Caco-2 (cell line): ENCODE measurements at regions of chr1 and their contacts with region 1.

Region 1: DNA sequence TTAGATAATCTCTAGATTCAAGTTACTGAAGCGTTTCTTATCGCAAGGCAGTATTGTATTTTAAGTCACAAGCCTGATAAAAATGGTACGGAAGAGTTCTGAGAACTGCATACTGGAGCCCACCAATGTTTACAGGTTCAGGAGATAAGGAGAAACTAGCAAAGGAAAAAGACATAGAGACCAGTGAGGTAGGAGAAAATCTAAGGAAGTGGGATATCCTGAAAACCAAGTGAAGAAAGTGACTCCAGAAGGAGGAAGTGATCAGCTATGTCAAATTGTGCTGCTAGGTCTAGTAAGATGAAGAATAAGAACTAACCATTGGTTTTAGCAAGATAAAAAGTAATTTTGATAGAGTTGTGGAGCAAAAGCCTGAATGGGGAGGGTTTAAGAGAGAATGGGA is 31.0 kb upstream of the ACADM start:
- DNase-seq: no peak
- H3K4me3 ChIP-seq: no peak overlapping the region
- H3K4me3 Mint-ChIP-seq: no peak overlapping the region
- H3K27ac Mint-ChIP-seq: no peak overlapping the region
- H3K4me1 ChIP-seq: no peaks in the 10 kb centered on the region
- H3K4me1 Mint-ChIP-seq: no peaks in the 10 kb centered on the region
- H3K27me3 ChIP-seq: no peaks in the 10 kb centered on the region
- H3K27me3 Mint-ChIP-seq: no peaks in the 10 kb centered on the region
- CTCF ChIP-seq: no peak

Region 2: GRCh38 chr1:75514270-75514669 is 179.3 kb before region 1 on chr1:
- CTCF ChIA-PET with region 1: no interaction called
- POLR2A ChIA-PET with region 1: no interaction called
- intact Hi-C with region 1: loop called (anchors 5 kb)
- DNase-seq: no peak
- H3K4me3 ChIP-seq: no peak overlapping the region
- H3K4me3 Mint-ChIP-seq: no peak overlapping the region
- H3K27ac Mint-ChIP-seq: no peak overlapping the region
- H3K4me1 ChIP-seq: no peaks in the 10 kb centered on the region
- H3K4me1 Mint-ChIP-seq: no peaks in the 10 kb centered on the region
- H3K27me3 ChIP-seq: no peaks in the 10 kb centered on the region
- H3K27me3 Mint-ChIP-seq: no peaks in the 10 kb centered on the region
- CTCF ChIP-seq: no peak

Region 3: DNA sequence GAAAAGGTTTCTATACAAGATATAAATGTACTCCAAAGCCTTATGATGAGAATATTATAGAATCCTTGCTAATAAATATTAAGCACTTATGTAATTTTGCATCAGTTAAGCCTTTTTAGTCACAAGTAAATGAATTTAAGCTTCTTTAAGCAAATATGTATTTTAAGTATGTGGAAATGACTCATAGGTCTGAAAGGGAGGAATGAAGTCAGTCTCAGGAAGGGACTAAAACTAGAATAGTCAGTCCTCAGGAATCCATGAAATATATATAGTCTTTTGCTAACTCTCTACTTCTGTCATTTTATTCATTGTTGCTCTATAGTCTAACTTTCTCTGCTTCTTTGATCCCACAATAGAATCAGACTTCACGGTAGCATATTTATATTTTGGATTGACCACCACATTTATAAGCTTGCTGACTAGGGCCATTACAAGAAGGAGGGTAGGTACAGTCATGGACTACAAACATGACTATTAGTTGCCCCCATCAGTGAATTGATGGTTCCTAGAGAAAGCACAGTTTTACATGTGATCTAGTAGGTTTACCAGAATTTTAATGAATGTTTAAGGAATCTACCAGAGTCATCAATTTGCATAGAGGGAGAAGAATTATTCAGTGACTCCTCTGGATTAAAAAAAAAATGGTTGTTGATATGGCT is 72.3 kb after region 1 on chr1:
- CTCF ChIA-PET with region 1: no interaction called
- POLR2A ChIA-PET with region 1: no interaction called
- intact Hi-C with region 1: no loop called
- DNase-seq: no peak
- H3K4me3 ChIP-seq: no peak overlapping the region
- H3K4me3 Mint-ChIP-seq: no peak overlapping the region
- H3K27ac Mint-ChIP-seq: no peak overlapping the region
- H3K4me1 ChIP-seq: 0 out of 2 replicates have a peak, but pooled peaks cover 4% of the 10 kb centered on the region
- H3K4me1 Mint-ChIP-seq: no peaks in the 10 kb centered on the region
- H3K27me3 ChIP-seq: no peaks in the 10 kb centered on the region
- H3K27me3 Mint-ChIP-seq: no peaks in the 10 kb centered on the region
- CTCF ChIP-seq: no peak